ENCODE measurements at regions of chr7 and their contacts with region 1.

Region 1: GRCh38 chr7:124276019-124276622 is 243.3 kb upstream of the TMEM229A start:
- DNase-seq: peak; percentile 23 to 77
- H3K4me3 ChIP-seq: no peak overlapping the region
- H3K27ac ChIP-seq: no peak overlapping the region
- H3K4me1 ChIP-seq: peaks cover 0 to 7% (median 2%) of the 10 kb centered on the region in 4 experiments; a peak in 2 of 7 replicates
- H3K27me3 ChIP-seq: no peaks in the 10 kb centered on the region
- CTCF ChIP-seq: peak; percentile 64 to 80 (median 72)
- EP300 ChIP-seq: no peak
- POLR2A ChIP-seq: no peak
- RAD21 ChIP-seq: peak; percentile 62 to 63

Region 2: DNA sequence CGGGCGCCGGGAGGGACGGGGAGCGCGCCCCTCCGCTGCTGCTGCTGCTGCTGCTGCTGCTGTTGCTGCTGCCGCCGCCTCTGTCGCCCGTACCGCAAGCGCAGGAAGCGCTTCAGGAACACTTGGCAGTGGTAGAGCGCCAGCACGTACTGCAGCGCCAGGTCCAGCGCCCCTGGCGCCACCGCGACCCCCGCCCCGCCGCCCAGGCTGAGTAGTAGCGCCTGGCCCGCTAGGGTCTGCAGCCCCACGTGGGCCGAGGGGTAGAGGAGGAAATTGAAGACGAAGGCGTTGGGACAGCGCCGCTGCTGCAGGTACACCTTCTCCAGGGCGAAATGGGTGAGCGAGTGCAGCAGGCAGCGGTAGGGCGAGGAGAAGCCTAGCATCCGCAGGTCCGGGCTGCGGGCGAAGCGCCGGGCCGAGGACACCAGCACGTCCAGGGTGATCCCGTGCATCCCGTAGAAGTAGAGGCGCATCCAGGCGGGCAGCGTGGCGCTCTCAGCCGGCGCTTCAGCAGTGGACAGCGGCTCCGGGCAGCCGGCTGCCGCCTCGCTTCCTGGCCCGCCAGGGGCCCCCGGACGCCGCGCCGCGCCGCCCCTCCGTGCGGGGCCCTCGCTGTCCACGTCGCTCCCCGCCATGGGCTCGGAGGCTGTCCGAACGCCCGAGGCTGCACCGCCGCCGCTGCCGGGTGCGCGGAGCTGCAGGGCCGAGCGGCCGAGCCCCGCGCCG is 243.6 kb before region 1 on chr7 and contains the start of gene TMEM229A:
- CTCF ChIA-PET with region 1: no interaction called
- POLR2A ChIA-PET with region 1: no interaction called
- DNase-seq: peak; percentile 44 to 81
- H3K4me3 ChIP-seq: peak within 1 kb of the TSS; percentile 49 to 68 (median 56)
- H3K27ac ChIP-seq: no peak within 1 kb of the TSS
- H3K4me1 ChIP-seq: peaks cover 2 to 9% (median 5%) of the 10 kb centered on the region in 4 experiments; a peak in 6 of 7 replicates
- H3K27me3 ChIP-seq: peaks cover 0 to 31% (median 12%) of the 10 kb centered on the region in 4 experiments; a peak in 6 of 7 replicates
- CTCF ChIP-seq: no peak
- EP300 ChIP-seq: no peak
- POLR2A ChIP-seq: no peak
- RAD21 ChIP-seq: no peak; a peak in 1 of 4 replicates
- total RNA-seq, gene TMEM229A: 0.54 and 0.75 TPM in 2 replicates

Region 3: DNA sequence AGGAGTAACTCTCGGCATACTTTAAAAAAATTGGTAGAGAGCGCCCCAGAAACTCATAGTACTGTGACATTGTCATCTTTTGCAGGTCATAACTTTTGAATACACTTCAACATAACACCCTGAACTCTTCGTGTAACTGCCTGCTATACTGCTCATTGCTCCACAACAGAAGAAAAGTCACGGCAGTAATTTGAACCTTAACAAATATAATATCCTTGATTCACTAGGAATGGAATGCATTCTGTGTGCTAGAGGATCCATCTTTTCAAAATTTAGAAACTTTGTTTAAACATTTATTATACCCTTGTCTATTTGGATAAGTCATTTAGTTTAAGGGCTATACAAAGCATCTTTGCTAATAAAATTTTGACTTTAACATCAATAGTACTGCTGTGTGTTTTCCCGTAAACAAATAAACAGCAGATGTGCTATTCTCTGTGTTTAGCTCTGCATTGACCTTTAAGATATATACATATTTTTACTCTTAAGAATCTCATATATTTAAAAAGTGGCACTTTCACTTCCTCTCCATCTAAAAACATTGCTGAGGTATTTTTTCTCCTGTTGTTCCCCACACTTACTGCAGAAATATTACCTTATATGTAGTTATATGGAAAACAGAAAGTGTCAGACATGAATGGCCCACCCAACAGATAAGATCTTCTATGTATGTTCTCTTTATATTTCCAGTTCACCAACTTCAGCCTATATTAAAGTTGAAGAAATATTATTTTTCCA is 25.7 kb before region 1 on chr7:
- CTCF ChIA-PET with region 1: interaction called, 14 read pairs
- POLR2A ChIA-PET with region 1: no interaction called
- DNase-seq: no peak
- H3K4me3 ChIP-seq: no peak overlapping the region
- H3K27ac ChIP-seq: no peak overlapping the region
- H3K4me1 ChIP-seq: no peaks in the 10 kb centered on the region; a peak in 1 of 7 replicates
- H3K27me3 ChIP-seq: no peaks in the 10 kb centered on the region
- CTCF ChIP-seq: no peak
- EP300 ChIP-seq: no peak
- POLR2A ChIP-seq: no peak
- RAD21 ChIP-seq: no peak

Region 4: DNA sequence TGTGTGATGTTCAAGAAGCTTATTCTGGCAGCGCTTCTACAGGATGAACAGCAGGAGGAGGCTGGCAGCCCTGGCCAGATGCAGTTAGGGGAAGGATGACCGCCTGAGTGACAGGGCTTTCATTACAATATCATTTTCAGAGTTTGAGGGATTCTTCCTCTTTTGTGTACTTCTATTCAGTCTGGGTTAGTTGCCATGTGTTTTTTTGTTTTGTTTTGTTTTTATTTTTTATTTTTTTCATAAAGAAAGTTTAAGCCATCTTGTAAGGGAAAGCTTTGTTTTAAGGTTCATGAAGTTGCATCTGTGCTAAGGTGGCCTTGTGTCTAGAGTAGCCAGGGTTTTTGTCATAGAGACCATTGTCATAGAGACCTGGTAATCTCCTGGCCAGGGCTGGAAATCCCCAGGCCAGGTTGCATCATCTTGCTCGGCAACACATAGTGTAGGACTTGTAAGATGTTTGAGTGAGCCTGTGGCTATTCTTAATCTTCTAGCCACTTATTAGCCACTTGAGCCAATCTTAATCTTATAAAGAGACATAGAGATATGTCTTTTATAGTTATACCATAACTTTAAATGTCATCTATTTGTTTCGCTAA is 12.8 kb before region 1 on chr7:
- CTCF ChIA-PET with region 1: interaction called, 35 read pairs
- POLR2A ChIA-PET with region 1: interaction called, 5 read pairs
- DNase-seq: no peak
- H3K4me3 ChIP-seq: no peak overlapping the region
- H3K27ac ChIP-seq: no peak overlapping the region
- H3K4me1 ChIP-seq: peaks cover 3 to 10% (median 8%) of the 10 kb centered on the region in 4 experiments; a peak in 5 of 7 replicates
- H3K27me3 ChIP-seq: peaks cover 0 to 1% (median 0%) of the 10 kb centered on the region in 4 experiments; a peak in 4 of 7 replicates
- CTCF ChIP-seq: no peak
- EP300 ChIP-seq: peak in 1 of 2 experiments; percentile 70; a peak in 1 of 3 replicates
- POLR2A ChIP-seq: no peak
- RAD21 ChIP-seq: peak in 1 of 2 experiments; percentile 9; a peak in 1 of 4 replicates

Measured in H1 (cell line).